Ascending aorta (tissue), 2 donors: ENCODE measurements at regions of chr1 and their contacts with region 1.

Region 1: DNA sequence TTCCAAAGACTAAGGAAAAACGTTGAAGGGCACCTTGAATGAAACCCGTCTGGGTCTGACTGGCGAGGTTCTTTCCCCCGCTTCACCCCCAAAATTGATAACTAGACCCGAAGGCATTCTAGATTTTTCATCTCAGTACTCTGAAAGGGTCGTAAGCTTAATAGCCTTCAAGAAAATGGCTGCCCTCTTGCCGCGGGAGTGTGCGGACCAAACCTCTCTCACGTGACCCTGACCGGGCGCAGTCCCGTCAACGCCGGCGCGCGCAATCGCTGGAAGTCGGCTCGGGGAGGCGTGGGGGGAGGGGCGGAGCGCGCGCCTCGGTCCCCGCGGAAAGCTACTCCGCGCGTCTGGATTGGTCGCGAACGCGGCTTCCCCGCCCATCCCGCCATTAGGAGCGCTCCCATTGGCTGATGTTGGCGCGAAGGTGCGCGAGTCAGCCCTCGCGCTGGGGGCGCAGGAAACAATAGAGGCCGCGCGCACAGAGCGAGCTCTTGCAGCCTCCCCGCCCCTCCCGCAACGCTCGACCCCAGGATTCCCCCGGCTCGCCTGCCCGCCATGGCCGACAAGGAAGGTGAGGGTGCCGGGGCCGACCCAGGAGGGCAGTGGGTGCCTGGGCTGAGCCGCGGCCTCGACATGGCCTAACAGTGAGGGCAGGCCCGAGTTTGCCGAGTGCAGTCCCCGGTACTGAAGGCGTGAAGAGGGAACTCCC is at the start of gene RBBP4:
- DNase-seq: peak; percentile 90 to 98
- H3K4me3 ChIP-seq: peak within 1 kb of the TSS; percentile 79 to 100
- H3K27ac ChIP-seq: peak within 1 kb of the TSS; percentile 97 to 99
- H3K4me1 ChIP-seq: peaks cover 14 to 35% of the 10 kb centered on the region in 2 donors
- H3K27me3 ChIP-seq: no peaks in the 10 kb centered on the region
- CTCF ChIP-seq: no peak
- total RNA-seq, gene RBBP4: 45.4 TPM

Region 2: GRCh38 chr1:32580348-32581017 is 70.4 kb before region 1 on chr1:
- intact Hi-C with region 1: no loop called
- DNase-seq: no peak
- H3K4me3 ChIP-seq: no peak overlapping the region
- H3K27ac ChIP-seq: no peak overlapping the region
- H3K4me1 ChIP-seq: no peaks in the 10 kb centered on the region
- H3K27me3 ChIP-seq: no peaks in the 10 kb centered on the region
- CTCF ChIP-seq: no peak

Region 3: GRCh38 chr1:32619701-32620485 is 31.0 kb before region 1 on chr1:
- intact Hi-C with region 1: no loop called
- DNase-seq: no peak
- H3K4me3 ChIP-seq: no peak overlapping the region
- H3K27ac ChIP-seq: no peak overlapping the region
- H3K4me1 ChIP-seq: no peaks in the 10 kb centered on the region
- H3K27me3 ChIP-seq: no peaks in the 10 kb centered on the region
- CTCF ChIP-seq: no peak

Region 4: DNA sequence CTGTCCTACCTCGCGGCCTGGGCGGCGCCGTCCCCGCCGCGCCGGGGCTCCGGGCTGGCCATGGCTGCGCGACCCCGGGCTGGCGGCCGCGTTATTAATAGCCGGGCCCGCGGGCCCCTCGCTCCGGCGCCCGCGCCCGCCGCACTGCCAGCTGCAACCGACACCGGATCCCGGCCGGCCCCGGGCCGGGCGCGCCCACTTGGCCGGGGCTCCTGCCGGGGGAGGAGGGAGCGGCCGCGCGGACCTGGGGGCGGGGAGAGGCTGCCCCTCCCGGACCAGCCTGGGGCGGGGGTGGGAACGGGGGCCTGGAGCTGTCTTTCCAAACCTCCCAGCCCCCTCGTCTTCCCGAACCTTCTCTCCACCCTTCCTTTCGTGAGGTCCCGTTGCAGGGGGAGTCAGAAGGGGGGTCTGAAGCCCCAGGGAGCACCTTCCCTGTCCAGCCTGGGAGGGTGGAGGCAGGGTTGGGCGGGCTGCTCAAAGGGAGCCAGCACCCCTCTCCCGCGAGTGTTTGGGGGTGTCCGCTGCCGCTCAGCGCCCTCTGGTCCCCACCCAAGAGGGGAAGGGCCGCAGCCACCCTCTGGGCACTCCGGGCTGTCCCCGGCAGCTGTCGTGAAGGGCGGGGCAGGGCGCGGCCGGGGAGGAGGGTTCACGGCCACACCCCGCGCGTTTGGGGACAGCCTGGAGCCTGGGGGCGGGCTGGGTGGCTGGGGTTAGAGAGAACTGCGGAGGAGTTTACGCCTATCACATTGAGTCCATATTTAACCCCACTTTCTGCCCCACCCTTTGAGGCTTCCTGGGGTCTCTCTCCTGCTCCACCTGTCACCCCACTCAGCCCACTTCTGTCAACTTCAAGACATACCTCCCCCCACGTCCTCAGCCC is 51.9 kb after region 1 on chr1 and contains the start of gene SYNC:
- intact Hi-C with region 1: loop called (anchors 1 kb)
- DNase-seq: peak in 1 of 2 donors; percentile 85
- H3K4me3 ChIP-seq: peak within 1 kb of the TSS; percentile 86 to 93
- H3K27ac ChIP-seq: peak within 1 kb of the TSS; percentile 99
- H3K4me1 ChIP-seq: peaks cover 14 to 22% of the 10 kb centered on the region in 2 donors
- H3K27me3 ChIP-seq: no peaks in the 10 kb centered on the region
- CTCF ChIP-seq: no peak
- total RNA-seq, gene SYNC: 87.3 TPM

Region 5: GRCh38 chr1:32753532-32754312 is 102.8 kb after region 1 on chr1:
- intact Hi-C with region 1: loop called (anchors 5 kb)
- DNase-seq: peak in 1 of 2 donors; percentile 81
- H3K4me3 ChIP-seq: peak overlapping the region; percentile 73 to 84
- H3K27ac ChIP-seq: peak overlapping the region; percentile 62 to 75
- H3K4me1 ChIP-seq: peaks cover 8 to 11% of the 10 kb centered on the region in 2 donors
- H3K27me3 ChIP-seq: no peaks in the 10 kb centered on the region
- CTCF ChIP-seq: no peak

Region 6: GRCh38 chr1:32939655-32940371 is 288.9 kb after region 1 on chr1:
- intact Hi-C with region 1: no loop called
- DNase-seq: no peak
- H3K4me3 ChIP-seq: no peak overlapping the region
- H3K27ac ChIP-seq: peak overlapping the region in 1 of 2 donors; percentile 1
- H3K4me1 ChIP-seq: no peaks in the 10 kb centered on the region
- H3K27me3 ChIP-seq: no peaks in the 10 kb centered on the region
- CTCF ChIP-seq: no peak